Gastrocnemius medialis (tissue), 4 donors: ENCODE measurements at regions of chr6 and their contacts with region 1.

Region 1: DNA sequence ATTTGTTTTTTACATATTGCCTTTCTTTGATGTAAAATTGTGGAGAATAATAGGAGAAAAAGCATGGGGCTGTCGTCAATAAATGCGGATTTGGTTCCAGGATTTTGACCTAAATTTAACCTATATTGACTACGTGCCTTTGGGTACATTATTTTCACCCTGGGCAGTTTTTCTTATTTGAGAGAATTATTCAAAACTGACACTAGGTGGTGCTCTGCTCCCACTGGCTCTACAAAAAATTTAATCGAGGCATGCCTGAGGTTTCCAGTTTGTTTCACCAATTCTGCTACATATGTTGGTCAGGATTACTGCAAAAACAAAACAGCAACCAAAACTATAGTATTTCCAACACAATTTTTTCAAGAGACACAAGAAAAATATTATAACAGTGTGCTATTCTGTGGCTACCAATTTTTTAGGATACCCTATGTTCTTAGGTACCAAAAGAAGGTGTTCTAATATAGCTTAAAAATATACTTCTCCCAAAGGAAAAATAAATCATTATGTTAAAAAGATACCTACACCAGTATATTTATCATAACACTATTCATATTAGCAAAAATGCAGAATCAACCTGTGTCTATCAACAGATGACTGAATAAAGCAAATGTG is 48.6 kb upstream of the FABP7 start:
- DNase-seq: no peak
- ATAC-seq: peak; percentile 62
- H3K4me3 ChIP-seq: no peak overlapping the region
- H3K27ac ChIP-seq: no peak overlapping the region
- H3K4me1 ChIP-seq: peaks cover 5 to 9% of the 10 kb centered on the region in 2 donors
- H3K27me3 ChIP-seq: no peaks in the 10 kb centered on the region
- CTCF ChIP-seq: peak; percentile 68 to 88 (median 73)
- POLR2A ChIP-seq: no peak

Region 2: GRCh38 chr6:122657601-122658000 is 73.3 kb before region 1 on chr6:
- in situ Hi-C with region 1: no loop called
- intact Hi-C with region 1: no loop called
- DNase-seq: no peak
- ATAC-seq: no peak
- H3K4me3 ChIP-seq: no peak overlapping the region
- H3K27ac ChIP-seq: no peak overlapping the region
- H3K4me1 ChIP-seq: no peaks in the 10 kb centered on the region
- H3K27me3 ChIP-seq: no peaks in the 10 kb centered on the region
- CTCF ChIP-seq: no peak
- POLR2A ChIP-seq: no peak

Region 3: DNA sequence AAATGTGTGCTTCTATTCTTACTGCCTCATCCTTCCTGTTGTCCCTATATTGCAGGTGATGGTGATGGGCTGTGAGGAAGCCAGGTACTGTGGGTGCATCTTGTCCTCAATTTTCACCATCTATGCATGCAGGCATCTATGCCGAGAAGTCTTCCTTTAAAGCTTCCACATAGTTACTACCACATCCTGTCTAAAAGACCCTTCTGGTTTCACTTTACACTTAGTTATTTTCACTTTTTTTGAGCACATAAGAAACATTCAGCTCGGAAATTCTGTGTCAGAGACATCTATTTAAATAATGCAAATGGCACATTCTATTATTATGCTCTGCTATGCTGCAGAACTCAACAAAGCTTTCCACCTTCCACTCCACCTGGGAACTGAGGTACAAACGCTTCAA is 20.4 kb after region 1 on chr6:
- in situ Hi-C with region 1: no loop called
- intact Hi-C with region 1: no loop called
- DNase-seq: no peak
- ATAC-seq: no peak
- H3K4me3 ChIP-seq: no peak overlapping the region
- H3K27ac ChIP-seq: peak overlapping the region in 1 of 4 donors; percentile 84
- H3K4me1 ChIP-seq: peaks cover 14 to 18% of the 10 kb centered on the region in 2 donors
- H3K27me3 ChIP-seq: no peaks in the 10 kb centered on the region
- CTCF ChIP-seq: no peak
- POLR2A ChIP-seq: no peak

Region 4: DNA sequence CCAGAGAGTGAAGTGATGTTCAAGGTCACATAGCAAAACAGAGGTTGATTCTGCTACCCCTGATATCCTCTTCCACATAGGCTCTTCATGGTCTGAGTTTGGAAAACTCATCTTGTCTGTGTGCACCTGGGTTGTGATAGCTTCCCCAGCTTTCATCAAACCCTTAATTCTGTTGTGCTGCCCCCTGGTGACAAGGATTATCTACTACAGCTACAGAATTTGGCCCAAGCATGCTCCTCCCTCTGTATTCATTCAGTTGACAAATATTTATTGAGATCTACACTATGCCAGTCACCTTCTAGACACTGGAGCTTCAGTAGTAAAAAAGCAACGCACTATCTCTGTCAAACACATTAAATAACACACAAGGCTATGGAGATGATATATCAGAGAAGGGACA is 108.6 kb after region 1 on chr6:
- in situ Hi-C with region 1: loop called (anchors 5 kb)
- intact Hi-C with region 1: loop called (anchors 1 kb)
- DNase-seq: peak; percentile 14 to 32
- ATAC-seq: peak; percentile 76 to 96
- H3K4me3 ChIP-seq: no peak overlapping the region
- H3K27ac ChIP-seq: no peak overlapping the region
- H3K4me1 ChIP-seq: no peaks in the 10 kb centered on the region
- H3K27me3 ChIP-seq: no peaks in the 10 kb centered on the region
- CTCF ChIP-seq: peak; percentile 66 to 78 (median 72)
- POLR2A ChIP-seq: no peak

Region 5: DNA sequence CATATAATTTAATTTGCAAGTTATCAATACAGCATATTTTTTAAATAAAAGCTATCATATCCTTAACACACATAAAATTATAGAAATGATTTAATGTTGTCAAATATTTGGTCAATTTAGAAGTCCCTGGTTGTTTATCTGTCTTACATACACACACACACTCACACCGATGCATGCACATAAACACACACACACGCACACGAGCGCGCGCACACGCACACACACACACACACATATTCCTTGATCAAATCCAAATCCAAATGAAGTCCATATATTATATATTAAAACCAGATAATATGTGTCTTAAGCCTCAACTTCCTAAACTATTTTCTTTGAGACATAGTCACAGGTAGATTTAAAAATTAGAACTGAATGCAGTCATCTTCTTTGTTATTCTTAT is 385.5 kb after region 1 on chr6:
- in situ Hi-C with region 1: no loop called
- intact Hi-C with region 1: no loop called
- DNase-seq: no peak
- ATAC-seq: no peak
- H3K4me3 ChIP-seq: no peak overlapping the region
- H3K27ac ChIP-seq: no peak overlapping the region
- H3K4me1 ChIP-seq: peaks cover 0 to 16% of the 10 kb centered on the region in 2 donors
- H3K27me3 ChIP-seq: no peaks in the 10 kb centered on the region
- CTCF ChIP-seq: no peak
- POLR2A ChIP-seq: no peak

Region 6: DNA sequence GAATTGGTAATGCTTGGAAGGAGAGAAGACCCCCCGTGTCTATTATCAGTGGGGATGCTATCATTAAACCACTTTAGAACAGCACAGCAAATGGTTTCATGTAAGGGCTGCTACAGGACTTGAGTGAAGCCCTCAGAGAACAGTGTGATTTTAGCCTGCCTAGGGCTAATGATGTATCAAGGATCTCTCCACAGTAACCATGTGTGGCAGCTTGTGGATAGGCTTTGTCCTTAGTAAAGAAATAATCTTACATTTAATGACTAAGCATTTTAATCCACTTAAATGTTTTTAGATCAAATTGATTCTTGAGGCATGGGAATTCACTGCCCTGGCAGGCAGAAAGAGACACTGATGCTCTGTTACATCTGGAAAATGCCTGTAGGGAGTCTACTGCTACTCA is 1567.8 kb after region 1 on chr6:
- in situ Hi-C with region 1: no loop called
- intact Hi-C with region 1: no loop called
- DNase-seq: no peak
- ATAC-seq: no peak
- H3K4me3 ChIP-seq: no peak overlapping the region
- H3K27ac ChIP-seq: no peak overlapping the region
- H3K4me1 ChIP-seq: no peaks in the 10 kb centered on the region
- H3K27me3 ChIP-seq: no peaks in the 10 kb centered on the region
- CTCF ChIP-seq: no peak
- POLR2A ChIP-seq: no peak